PC-3 (cell line): ENCODE measurements at regions of chr18 and their contacts with region 1.

Region 1: DNA sequence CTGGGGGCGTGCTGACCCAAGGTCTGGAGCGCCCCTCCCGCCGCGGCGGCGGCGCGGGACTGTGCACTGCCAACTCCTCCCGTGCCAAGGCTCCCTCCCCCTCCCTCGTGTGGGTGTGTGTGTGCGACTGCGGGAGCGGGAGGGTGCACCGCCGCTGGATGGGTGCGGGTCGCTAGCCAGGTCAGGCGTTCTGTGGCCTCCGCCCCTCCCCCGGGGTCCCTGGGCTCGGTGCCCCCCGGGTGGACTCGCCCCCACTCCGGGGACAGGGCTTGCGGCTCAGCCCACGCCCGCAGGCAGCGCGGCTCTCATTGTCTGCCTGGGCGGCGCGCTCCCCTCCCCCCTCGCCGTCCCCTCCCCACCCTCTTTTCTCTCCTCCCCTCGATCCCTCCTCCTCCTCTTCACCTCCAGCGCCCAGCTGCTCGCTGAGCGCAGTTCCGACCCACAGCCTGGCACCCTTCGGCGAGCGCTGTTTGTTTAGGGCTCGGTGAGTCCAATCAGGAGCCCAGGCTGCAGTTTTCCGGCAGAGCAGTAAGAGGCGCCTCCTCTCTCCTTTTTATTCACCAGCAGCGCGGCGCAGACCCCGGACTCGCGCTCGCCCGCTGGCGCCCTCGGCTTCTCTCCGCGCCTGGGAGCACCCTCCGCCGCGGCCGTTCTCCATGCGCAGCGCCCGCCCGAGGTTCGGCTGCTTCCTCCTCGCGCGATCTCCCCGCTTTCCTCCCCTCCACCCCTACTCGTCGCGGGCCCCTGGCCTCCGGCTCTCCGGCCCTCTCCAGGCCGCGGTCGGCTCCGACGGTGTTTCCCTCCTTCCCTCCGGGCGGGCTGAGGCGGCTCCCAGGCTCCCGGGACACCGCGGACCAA is at the start of gene GATA6:
- DNase-seq: peak; percentile 91
- ATAC-seq: peak; percentile 79
- H3K4me3 ChIP-seq: peak within 1 kb of the TSS; percentile 100
- H3K27ac ChIP-seq: peak within 1 kb of the TSS; percentile 80
- H3K4me1 ChIP-seq: peaks cover 13% of the 10 kb centered on the region
- H3K27me3 ChIP-seq: peaks cover 6% of the 10 kb centered on the region
- CTCF ChIP-seq: peak; percentile 55; the same call in 1 of the 2 replicates
- total RNA-seq, gene GATA6: 19.4 and 24.1 TPM in 2 replicates

Region 2: GRCh38 chr18:21955757-21956652 is 213.2 kb before region 1 on chr18:
- CTCF ChIA-PET with region 1: no interaction called
- POLR2A ChIA-PET with region 1: no interaction called
- intact Hi-C with region 1: loop called (anchors 5 kb)
- DNase-seq: peak; percentile 81
- ATAC-seq: peak; percentile 99
- H3K4me3 ChIP-seq: no peak overlapping the region
- H3K27ac ChIP-seq: no peak overlapping the region
- H3K4me1 ChIP-seq: no peaks in the 10 kb centered on the region
- H3K27me3 ChIP-seq: no peaks in the 10 kb centered on the region
- CTCF ChIP-seq: peak; percentile 95

Region 3: GRCh38 chr18:22032392-22032961 is 136.8 kb before region 1 on chr18:
- CTCF ChIA-PET with region 1: no interaction called
- POLR2A ChIA-PET with region 1: no interaction called
- intact Hi-C with region 1: loop called (anchors 2 kb)
- DNase-seq: peak; percentile 97
- ATAC-seq: peak; percentile 99
- H3K4me3 ChIP-seq: peak overlapping the region; percentile 43
- H3K27ac ChIP-seq: peak overlapping the region; percentile 86
- H3K4me1 ChIP-seq: peaks cover 17% of the 10 kb centered on the region
- H3K27me3 ChIP-seq: no peaks in the 10 kb centered on the region
- CTCF ChIP-seq: no peak

Region 4: DNA sequence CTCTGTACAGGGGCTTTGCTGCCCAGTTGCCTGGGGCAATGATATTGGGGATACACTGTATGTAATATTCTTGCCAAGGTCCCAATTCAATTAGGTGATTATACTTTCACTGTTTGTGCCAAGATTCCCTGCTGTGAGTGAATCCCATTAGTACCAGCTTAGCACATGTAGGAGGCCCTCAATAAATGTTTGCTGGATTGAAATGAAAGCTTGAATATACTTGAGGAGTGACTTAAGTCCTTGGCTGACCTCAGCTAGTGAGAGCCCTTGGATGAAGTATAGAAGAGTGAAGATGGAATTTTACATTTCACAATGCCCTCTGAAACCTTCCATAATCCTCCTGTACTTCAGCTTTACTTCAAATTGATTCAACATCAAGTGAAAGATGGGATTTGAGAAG is 103.0 kb after region 1 on chr18:
- CTCF ChIA-PET with region 1: no interaction called
- POLR2A ChIA-PET with region 1: no interaction called
- intact Hi-C with region 1: no loop called
- DNase-seq: no peak
- ATAC-seq: no peak
- H3K4me3 ChIP-seq: no peak overlapping the region
- H3K27ac ChIP-seq: no peak overlapping the region
- H3K4me1 ChIP-seq: no peaks in the 10 kb centered on the region
- H3K27me3 ChIP-seq: no peaks in the 10 kb centered on the region
- CTCF ChIP-seq: no peak

Region 5: DNA sequence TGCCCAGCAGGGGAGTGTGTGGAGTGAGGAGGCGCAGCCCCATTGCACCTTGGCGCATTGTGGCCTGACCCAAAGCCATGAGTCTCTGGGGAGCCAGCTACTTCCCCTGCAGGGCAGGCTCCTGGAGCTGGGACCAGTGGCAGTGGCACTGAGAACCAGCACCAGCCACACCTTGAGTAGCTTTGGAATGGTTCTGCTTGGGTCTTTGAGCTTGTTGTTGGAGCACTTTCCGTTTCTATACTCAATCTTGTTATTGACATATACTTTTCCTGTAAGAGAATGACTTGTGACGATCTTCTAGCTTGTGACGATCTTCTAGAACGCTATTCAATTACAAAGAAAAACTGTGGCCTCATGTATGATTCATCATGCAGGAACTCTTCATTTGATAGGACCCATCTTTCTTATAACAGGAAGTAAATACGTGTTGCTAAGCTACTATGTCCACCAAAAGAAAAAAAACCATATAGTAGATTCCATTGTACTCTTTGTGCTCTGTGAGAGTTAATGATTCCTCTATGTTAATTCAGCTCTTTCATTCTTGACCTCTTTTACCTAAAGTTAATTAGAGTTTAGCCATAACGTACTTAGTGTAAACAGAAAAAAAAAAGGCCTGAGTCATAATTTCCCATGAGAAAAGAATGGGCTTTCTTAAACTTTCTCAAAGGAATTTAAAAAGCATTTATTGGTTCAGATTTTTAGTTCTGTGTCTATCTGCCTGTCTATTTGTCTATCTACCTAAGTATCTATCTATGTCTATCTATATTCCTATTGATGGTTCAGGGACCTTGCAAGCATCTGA is 113.3 kb after region 1 on chr18:
- CTCF ChIA-PET with region 1: no interaction called
- POLR2A ChIA-PET with region 1: interaction called, 3 read pairs
- intact Hi-C with region 1: loop called (anchors 1 kb)
- DNase-seq: peak; percentile 89
- ATAC-seq: peak; percentile 68
- H3K4me3 ChIP-seq: peak overlapping the region; percentile 19; the same call in 1 of the 2 replicates
- H3K27ac ChIP-seq: peak overlapping the region; percentile 83
- H3K4me1 ChIP-seq: peaks cover 46% of the 10 kb centered on the region
- H3K27me3 ChIP-seq: no peaks in the 10 kb centered on the region
- CTCF ChIP-seq: no peak

Region 6: GRCh38 chr18:22694954-22695353 is 525.7 kb after region 1 on chr18:
- CTCF ChIA-PET with region 1: no interaction called
- POLR2A ChIA-PET with region 1: no interaction called
- intact Hi-C with region 1: loop called (anchors 5 kb)
- DNase-seq: peak; percentile 93
- ATAC-seq: peak; percentile 99
- H3K4me3 ChIP-seq: 0 out of 2 replicates have a peak overlapping the region, but pooled peaks have one; percentile 30
- H3K27ac ChIP-seq: peak overlapping the region; percentile 56
- H3K4me1 ChIP-seq: peaks cover 24% of the 10 kb centered on the region
- H3K27me3 ChIP-seq: no peaks in the 10 kb centered on the region
- CTCF ChIP-seq: no peak